HEK293T (cell line): ENCODE measurements at regions of chr4 and their contacts with region 1.

Region 1: DNA sequence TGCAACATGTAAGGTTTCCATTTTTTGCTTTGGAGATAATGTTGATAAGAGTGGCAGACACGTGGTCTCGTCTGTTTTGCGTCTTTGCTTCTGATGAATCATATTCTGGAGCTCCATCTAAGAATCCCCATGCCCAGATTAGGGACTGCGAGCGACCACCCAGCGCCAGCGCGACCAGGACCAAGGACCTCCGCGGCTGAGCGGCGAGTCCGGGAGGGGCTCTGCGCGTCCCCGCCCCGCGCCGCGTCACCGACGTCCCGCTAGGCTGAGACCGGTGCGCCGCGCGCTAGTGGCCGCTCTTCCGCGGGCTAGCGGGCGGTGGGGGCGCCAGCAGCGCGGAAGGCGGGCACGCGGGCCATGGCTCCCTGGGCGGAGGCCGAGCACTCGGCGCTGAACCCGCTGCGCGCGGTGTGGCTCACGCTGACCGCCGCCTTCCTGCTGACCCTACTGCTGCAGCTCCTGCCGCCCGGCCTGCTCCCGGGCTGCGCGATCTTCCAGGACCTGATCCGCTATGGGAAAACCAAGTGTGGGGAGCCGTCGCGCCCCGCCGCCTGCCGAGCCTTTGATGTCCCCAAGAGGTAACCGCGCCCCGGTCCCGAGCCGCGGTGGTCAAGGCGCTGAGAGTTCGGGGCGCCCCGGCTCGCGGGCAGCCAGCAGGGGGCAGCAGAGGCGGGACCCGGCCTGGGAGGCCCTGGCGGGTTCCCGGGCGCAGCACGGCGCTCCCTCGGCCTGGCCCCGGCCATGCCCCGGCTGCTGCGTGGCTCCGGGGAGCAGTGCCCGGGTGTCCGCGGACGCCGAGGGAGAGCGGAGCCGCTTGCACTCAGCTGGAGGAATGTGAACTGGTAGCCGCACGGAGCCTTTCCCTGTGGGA is at the start of gene SRD5A3:
- DNase-seq: peak; percentile 84

Region 2: GRCh38 chr4:55546756-55547465 is 200.7 kb after region 1 on chr4 and contains the start of gene CLOCK:
- CTCF ChIA-PET with region 1: interaction called, 4 read pairs
- POLR2A ChIA-PET with region 1: interaction called, 14 read pairs
- DNase-seq: peak; percentile 85